Natural killer cell (primary cell): ENCODE measurements at regions of chr16 and their contacts with region 1.

Region 1: GRCh38 chr16:391885-392335 is 5.1 kb upstream of the NME4 start:
- DNase-seq: peak; percentile 85 to 92
- ATAC-seq: peak; percentile 84 to 95 (median 91)
- H3K4me3 ChIP-seq: no peak overlapping the region
- H3K4me3 Mint-ChIP-seq: peak overlapping the region; percentile 57
- H3K27ac ChIP-seq: peak overlapping the region; percentile 62
- H3K27ac Mint-ChIP-seq: peak overlapping the region; percentile 85 to 91
- H3K4me1 ChIP-seq: peaks cover 28% of the 10 kb centered on the region
- H3K4me1 Mint-ChIP-seq: peaks cover 21 to 25% of the 10 kb centered on the region in 2 donors
- H3K27me3 ChIP-seq: no peaks in the 10 kb centered on the region
- H3K27me3 Mint-ChIP-seq: no peaks in the 10 kb centered on the region
- CTCF ChIP-seq: peak; percentile 92

Region 2: DNA sequence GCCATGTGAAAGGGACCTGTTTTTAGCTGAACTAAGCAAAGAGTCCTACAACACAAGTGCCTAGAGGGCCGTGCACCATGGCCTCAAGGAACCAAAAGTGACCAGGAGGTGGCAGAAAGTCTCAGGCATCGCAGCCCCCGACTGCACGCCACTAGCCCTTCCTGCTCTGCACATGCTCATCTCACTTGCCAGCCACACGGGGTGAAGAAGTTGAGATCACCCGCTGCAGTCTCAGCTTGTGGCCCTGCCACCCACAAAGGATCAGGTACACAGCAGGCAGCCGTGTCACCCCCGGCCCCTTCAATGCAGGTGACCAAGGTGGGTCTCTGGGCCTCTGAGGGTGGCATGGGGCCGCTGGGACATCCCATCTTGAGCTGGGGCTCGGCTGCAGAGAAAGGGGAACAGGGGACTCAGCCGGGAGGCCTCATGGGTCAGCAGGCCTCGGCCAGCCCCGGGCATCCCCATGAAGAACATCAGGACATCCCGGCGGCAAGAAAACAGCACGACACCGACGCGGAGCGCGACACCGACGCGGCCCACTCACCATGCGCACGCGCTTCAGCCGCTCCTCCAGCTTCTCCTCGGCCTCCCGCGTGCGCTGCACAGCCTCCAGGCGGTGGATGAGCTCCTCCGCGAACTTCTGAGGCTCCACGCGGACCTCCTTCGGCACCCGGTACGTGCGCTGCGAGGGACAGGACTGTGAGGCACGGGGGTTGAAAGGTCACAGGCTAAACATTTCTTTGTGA is 88.0 kb before region 1 on chr16:
- intact Hi-C with region 1: no loop called
- DNase-seq: peak in 1 of 2 donors; percentile 50
- ATAC-seq: peak in 2 of 3 donors; percentile 42 to 48
- H3K4me3 ChIP-seq: no peak overlapping the region
- H3K4me3 Mint-ChIP-seq: no peak overlapping the region
- H3K27ac ChIP-seq: no peak overlapping the region
- H3K27ac Mint-ChIP-seq: peak overlapping the region in 1 of 2 donors; percentile 48
- H3K4me1 ChIP-seq: peaks cover 40% of the 10 kb centered on the region
- H3K4me1 Mint-ChIP-seq: peaks cover 39 to 42% of the 10 kb centered on the region in 2 donors
- H3K27me3 ChIP-seq: no peaks in the 10 kb centered on the region
- H3K27me3 Mint-ChIP-seq: no peaks in the 10 kb centered on the region
- CTCF ChIP-seq: no peak

Region 3: GRCh38 chr16:425082-425718 is 33.3 kb after region 1 on chr16 and contains the start of gene RAB11FIP3:
- intact Hi-C with region 1: loop called (anchors 2 kb)
- DNase-seq: peak; percentile 84 to 89
- ATAC-seq: peak; percentile 86 to 93 (median 87)
- H3K4me3 ChIP-seq: peak within 1 kb of the TSS; percentile 84
- H3K4me3 Mint-ChIP-seq: peak within 1 kb of the TSS; percentile 92
- H3K27ac ChIP-seq: peak within 1 kb of the TSS; percentile 97
- H3K27ac Mint-ChIP-seq: peak within 1 kb of the TSS; percentile 89 to 91
- H3K4me1 ChIP-seq: peaks cover 24% of the 10 kb centered on the region
- H3K4me1 Mint-ChIP-seq: peaks cover 28 to 35% of the 10 kb centered on the region in 2 donors
- H3K27me3 ChIP-seq: no peaks in the 10 kb centered on the region
- H3K27me3 Mint-ChIP-seq: peaks cover 0 to 3% of the 10 kb centered on the region in 2 donors
- CTCF ChIP-seq: peak; percentile 17
- total RNA-seq, gene RAB11FIP3: 51.0 to 61.2 (median 55.3) TPM

Region 4: GRCh38 chr16:495127-495748 is 103.3 kb after region 1 on chr16:
- intact Hi-C with region 1: loop called (anchors 5 kb)
- DNase-seq: peak in 1 of 2 donors; percentile 36
- ATAC-seq: peak; percentile 18 to 70 (median 61)
- H3K4me3 ChIP-seq: no peak overlapping the region
- H3K4me3 Mint-ChIP-seq: no peak overlapping the region
- H3K27ac ChIP-seq: no peak overlapping the region
- H3K27ac Mint-ChIP-seq: no peak overlapping the region
- H3K4me1 ChIP-seq: no peaks in the 10 kb centered on the region
- H3K4me1 Mint-ChIP-seq: peaks cover 0 to 8% of the 10 kb centered on the region in 2 donors
- H3K27me3 ChIP-seq: no peaks in the 10 kb centered on the region
- H3K27me3 Mint-ChIP-seq: no peaks in the 10 kb centered on the region
- CTCF ChIP-seq: no peak

Region 5: DNA sequence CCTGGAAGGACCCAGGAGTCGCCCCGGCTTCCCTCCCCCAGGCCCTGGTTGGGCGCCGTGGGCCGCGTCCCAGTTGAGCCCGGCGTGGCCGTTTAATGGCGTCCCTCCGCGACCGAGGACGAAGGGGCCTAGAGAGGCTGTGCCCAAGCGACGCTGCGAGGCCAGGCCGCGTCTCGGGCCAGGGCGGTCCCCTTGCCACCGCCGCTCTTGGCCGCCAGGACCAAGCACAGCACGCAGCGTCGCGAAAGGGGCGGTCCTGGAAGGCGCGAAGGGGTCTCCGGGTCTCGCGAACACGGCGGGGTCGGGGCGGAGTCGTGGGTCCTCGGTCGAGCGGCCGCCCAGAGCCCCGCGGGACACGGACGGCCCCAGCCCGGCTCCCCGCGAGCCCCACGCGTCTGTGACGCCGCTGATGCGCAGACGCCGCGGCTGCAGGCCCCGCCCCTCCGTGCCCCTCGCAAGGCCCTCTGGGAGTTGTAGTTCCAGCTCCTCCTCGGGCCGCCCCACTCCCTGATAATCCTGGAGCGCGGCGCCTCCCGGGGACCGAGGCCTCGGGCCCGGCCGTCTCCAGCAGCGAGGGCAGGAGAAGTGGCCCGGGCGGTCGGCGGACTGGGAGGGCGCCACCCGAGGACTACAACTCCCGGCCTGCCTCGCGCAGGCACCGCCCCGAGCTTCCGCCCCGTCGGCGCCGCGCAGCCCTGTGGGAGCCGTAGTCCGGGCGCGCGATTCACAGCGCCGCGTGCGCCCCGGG is 135.3 kb after region 1 on chr16 and contains the start of gene CAPN15:
- intact Hi-C with region 1: loop called (anchors 2 kb)
- DNase-seq: peak; percentile 86 to 94
- ATAC-seq: peak; percentile 76 to 91 (median 81)
- H3K4me3 ChIP-seq: peak within 1 kb of the TSS; percentile 77
- H3K4me3 Mint-ChIP-seq: peak within 1 kb of the TSS; percentile 95
- H3K27ac ChIP-seq: peak within 1 kb of the TSS; percentile 95
- H3K27ac Mint-ChIP-seq: peak within 1 kb of the TSS; percentile 89 to 90
- H3K4me1 ChIP-seq: peaks cover 65% of the 10 kb centered on the region
- H3K4me1 Mint-ChIP-seq: peaks cover 24 to 38% of the 10 kb centered on the region in 2 donors
- H3K27me3 ChIP-seq: no peaks in the 10 kb centered on the region
- H3K27me3 Mint-ChIP-seq: no peaks in the 10 kb centered on the region
- CTCF ChIP-seq: no peak
- total RNA-seq, gene CAPN15: 151 to 275 (median 186) TPM

Region 6: GRCh38 chr16:610513-611334 is 218.8 kb after region 1 on chr16:
- intact Hi-C with region 1: loop called (anchors 5 kb)
- DNase-seq: peak; percentile 62 to 78
- ATAC-seq: peak; percentile 74 to 84 (median 78)
- H3K4me3 ChIP-seq: no peak overlapping the region
- H3K4me3 Mint-ChIP-seq: no peak overlapping the region
- H3K27ac ChIP-seq: no peak overlapping the region
- H3K27ac Mint-ChIP-seq: peak overlapping the region in 1 of 2 donors; percentile 31
- H3K4me1 ChIP-seq: peaks cover 6% of the 10 kb centered on the region
- H3K4me1 Mint-ChIP-seq: peaks cover 5 to 16% of the 10 kb centered on the region in 2 donors
- H3K27me3 ChIP-seq: no peaks in the 10 kb centered on the region
- H3K27me3 Mint-ChIP-seq: no peaks in the 10 kb centered on the region
- CTCF ChIP-seq: peak; percentile 77

Region 7: DNA sequence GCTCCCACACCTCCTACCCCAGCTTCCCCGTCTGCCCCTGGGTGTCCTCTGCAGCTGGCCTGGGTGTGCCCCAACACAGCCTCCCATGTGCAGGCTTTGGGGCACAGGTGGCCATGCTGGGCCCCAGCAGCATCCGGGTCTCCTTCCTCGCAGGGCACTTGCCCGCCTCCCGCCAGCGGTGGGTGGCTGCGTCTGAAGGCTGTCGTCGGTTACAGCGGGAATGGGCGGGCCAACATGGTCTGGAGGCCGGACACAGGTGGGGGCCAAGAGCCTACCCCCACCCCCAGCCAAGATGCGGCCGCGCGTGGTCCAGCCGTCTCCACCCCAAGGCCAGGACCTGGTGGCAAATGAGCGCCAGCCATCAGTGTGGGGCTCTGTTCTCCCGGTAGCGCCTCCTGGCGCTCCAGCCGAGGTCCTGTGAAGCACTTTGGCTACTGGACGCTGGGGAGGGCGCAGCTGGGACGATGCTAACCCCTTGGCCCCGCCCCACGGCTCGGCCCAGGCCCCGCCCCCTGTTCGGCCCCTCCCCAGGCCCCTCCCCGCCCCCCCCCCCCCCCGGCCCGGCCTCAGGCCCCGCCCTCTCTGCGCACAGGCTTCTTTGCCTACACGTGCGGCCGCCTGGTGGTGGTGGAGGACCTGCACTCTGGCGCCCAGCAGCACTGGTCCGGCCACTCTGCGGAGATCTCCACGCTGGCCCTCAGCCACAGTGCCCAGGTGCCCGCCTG is 268.7 kb after region 1 on chr16:
- intact Hi-C with region 1: loop called (anchors 5 kb)
- DNase-seq: peak; percentile 74 to 81
- ATAC-seq: peak; percentile 88 to 94 (median 88)
- H3K4me3 ChIP-seq: peak overlapping the region; percentile 10
- H3K4me3 Mint-ChIP-seq: peak overlapping the region; percentile 53
- H3K27ac ChIP-seq: peak overlapping the region; percentile 37
- H3K27ac Mint-ChIP-seq: peak overlapping the region; percentile 29 to 59
- H3K4me1 ChIP-seq: peaks cover 18% of the 10 kb centered on the region
- H3K4me1 Mint-ChIP-seq: peaks cover 4 to 13% of the 10 kb centered on the region in 2 donors
- H3K27me3 ChIP-seq: no peaks in the 10 kb centered on the region
- H3K27me3 Mint-ChIP-seq: no peaks in the 10 kb centered on the region
- CTCF ChIP-seq: peak; percentile 57